ENCODE measurements at regions of chr17 and their contacts with region 1.

Region 1: DNA sequence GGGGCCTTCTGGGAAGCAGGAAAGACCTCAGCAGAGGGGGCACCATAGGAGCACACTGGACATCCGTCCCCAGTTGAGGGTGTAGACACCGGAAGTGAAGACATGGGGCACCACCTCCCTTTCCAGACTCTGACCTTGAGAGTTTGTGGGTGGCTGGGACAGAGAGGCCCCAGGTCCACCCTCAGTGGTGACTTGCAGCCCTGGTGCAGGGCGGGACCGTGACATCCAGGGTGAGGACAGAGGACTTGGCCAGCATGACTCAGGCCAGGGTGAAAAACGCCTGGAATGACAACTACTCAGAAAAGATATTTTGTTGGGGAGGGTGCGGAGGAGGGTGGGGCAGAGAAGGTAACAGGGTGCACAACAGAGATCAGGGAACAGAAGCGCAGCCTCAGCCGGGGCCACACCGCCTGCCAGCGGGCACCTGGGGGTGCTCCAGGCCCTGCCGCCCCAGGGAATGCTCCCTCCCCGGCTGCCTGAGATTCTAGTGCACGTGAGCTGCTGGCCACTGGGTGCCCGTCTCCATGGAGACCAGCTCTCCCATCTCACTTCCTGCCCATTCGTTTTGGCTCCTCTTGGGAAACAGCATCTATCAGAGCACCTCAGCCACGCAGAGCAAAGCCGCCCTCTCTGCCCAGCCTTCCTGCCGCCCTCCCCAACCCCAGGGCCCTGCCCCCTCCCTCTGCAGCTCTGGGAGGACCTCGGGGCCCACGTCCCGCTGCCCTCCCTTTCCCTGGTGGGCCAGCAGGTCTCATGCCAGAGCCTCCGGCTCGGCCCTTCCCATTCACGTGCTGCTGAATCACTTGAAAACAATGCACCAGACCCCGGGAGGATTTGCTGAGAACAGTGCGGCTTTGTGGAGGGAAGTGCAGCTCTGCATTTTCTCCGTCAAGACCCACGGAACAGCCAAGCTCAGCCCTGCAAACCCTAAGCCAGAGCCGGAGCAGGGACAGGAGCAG is 19.6 kb downstream of the CEP295NL start:
- DNase-seq: peak; percentile 87
- H3K4me3 Mint-ChIP-seq: peak overlapping the region; percentile 58
- H3K27ac Mint-ChIP-seq: peak overlapping the region; percentile 92
- H3K4me1 Mint-ChIP-seq: peaks cover 29% of the 10 kb centered on the region
- H3K27me3 Mint-ChIP-seq: no peaks in the 10 kb centered on the region
- CTCF ChIP-seq: no peak

Region 2: DNA sequence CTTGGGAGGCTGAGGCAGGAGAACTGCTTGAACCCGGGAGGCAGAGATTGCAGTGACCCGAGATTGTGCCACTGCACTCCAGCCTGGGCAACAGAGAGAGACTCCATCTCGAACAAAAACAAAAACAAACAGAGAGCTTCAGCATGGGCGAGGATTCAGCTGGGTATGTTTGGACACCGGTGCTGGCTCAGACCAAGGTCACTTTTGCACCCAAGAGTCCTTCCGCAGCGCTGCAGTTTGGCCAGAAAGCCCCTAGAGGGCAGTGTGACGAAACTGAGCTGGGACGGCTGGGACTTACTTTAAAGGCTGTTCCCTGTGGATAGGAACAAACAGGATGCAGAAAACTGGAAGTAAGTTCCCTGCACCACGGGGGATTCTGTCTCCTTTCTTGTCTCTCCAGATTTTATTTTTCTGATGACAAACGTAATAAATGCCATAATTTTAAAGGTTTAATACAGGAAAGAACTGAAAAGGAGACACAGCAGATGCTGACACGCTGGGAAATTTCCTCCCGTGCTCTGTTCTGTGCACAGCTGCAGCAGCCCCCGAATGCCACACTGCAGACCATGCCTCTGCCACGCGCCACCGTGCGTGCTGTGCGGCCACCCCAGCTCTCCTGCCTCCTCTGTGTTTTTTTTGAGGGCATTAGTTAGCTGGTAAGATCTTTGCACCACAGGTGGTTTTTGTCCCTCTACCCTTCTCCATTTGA is 17.6 kb before region 1 on chr17:
- CTCF ChIA-PET with region 1: interaction called, 4 read pairs
- intact Hi-C with region 1: loop called (anchors 1 kb)
- DNase-seq: peak; percentile 81
- H3K4me3 Mint-ChIP-seq: no peak overlapping the region
- H3K27ac Mint-ChIP-seq: no peak overlapping the region
- H3K4me1 Mint-ChIP-seq: peaks cover 29% of the 10 kb centered on the region
- H3K27me3 Mint-ChIP-seq: no peaks in the 10 kb centered on the region
- CTCF ChIP-seq: peak; percentile 88

Region 3: DNA sequence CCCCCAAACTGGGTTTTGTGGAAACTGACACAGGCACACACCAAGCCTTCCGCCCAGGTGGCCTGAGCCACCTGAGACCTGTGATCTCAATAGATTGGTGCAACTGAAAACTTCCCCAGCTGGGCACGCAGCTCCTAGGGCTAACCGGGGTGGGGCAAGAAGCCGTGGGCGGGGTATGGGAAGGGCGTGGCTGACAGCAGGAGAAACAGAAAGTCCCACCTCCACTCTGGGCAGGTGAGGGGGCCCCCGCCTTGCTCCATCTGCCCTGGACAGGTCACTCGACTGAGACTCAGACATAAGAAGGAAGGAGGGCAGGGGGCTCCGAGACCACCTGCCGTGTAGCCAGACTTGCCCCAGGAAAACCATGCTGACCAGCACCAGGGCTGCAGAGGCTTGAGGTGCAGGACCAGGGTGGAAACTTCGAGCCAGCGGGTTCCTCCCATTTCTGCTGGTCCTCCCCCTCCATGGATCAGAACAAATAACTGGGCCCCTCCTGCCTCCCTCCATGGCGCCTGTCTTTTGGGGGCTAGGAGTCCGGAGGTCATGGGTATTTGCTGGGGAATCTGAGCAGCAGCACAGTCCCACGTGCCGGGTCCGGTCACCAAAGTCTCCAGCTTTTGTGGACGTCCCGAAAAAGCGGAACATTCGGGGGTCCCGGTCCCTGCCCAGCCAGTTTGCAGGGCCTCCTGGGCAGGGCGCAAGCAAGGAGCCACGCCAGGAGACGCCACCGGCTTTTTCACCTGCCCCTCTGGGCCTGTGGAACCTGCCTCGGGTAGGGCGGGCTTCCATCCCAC is 40.4 kb after region 1 on chr17:
- CTCF ChIA-PET with region 1: interaction called, 3 read pairs
- intact Hi-C with region 1: loop called (anchors 5 kb)
- DNase-seq: peak; percentile 92
- H3K4me3 Mint-ChIP-seq: peak overlapping the region; percentile 73
- H3K27ac Mint-ChIP-seq: peak overlapping the region; percentile 84
- H3K4me1 Mint-ChIP-seq: peaks cover 58% of the 10 kb centered on the region
- H3K27me3 Mint-ChIP-seq: peaks cover 13% of the 10 kb centered on the region
- CTCF ChIP-seq: no peak

Measured in Calu3 (cell line).